Right ventricle myocardium inferior (tissue), 1 donor: ENCODE measurements at regions of chr7 and their contacts with region 1.

Region 1: DNA sequence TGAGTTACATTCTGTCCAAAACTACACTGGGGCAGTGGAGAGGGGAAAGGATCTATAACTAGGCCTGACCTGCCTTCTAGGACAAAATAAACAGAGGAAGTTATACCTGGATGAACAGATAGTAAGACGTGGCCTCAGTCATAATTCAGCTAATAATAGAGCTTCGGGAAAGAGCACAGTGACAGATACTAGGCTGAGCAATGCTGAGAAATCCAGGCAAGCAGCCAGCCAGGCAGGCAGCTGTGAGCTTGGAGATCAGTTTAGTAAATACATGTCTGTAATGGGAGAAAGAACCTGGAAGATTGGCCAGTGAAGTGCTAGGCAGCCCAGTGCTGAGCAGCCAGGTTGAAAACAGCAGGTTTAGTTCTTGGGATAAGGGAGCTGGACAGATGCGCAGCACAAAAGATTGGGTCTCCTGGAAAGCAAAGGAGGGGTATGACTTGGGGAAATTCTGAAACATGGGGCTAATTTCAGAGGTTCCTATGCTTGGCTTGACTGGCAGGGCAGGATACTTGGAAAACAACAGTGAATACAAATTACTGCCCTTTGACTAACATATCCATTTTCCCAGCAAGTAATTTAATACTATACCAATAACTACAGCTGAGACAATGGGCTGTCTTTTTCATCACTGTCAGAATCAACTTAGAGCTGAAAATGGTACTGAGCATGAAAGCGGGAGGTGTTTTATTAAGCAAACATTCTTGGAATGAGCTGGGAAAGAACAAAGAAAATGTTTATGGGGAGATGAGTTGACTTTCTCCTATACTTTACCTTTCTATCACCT is 140.8 kb downstream of the DGKB start:
- DNase-seq: peak; percentile 82
- ATAC-seq: peak; percentile 97

Region 2: GRCh38 chr7:14834456-14834855 is 72.8 kb after region 1 on chr7:
- intact Hi-C with region 1: loop called (anchors 5 kb)
- DNase-seq: no peak
- ATAC-seq: peak; percentile 69

Region 3: DNA sequence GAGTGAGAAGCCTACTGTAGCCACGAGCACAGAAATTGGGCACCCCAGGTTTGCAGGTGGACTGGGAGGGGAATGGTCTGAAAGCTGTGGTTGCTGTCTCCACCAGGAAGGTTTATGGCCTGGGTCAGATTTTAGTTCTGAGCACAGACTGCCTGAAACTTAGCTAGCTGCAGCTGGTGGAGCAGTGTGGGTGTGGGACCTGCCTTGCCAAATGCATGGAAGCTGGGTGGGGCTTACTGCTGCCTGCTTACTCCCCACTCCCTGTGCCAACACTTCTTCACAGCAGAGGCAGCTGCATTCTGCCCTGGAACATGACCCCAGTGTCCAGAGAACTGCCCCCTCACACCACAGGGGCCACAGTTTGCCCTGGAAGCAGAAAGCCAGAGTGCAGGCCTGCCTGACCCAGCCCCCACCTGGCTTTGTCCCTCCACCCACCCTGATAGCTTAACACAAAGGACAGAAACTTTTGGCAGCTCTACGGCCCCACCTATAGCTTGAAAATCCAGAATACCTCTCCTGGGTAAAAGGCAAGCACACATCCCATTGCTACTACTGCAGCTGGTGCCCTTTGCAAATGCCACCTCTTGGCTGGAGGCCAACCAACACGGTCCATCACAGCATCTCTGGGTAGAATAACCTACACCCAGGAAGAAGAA is 518.5 kb after region 1 on chr7:
- intact Hi-C with region 1: no loop called
- DNase-seq: no peak
- ATAC-seq: no peak